ENCODE measurements at regions of chr17 and their contacts with region 1.

Region 1: DNA sequence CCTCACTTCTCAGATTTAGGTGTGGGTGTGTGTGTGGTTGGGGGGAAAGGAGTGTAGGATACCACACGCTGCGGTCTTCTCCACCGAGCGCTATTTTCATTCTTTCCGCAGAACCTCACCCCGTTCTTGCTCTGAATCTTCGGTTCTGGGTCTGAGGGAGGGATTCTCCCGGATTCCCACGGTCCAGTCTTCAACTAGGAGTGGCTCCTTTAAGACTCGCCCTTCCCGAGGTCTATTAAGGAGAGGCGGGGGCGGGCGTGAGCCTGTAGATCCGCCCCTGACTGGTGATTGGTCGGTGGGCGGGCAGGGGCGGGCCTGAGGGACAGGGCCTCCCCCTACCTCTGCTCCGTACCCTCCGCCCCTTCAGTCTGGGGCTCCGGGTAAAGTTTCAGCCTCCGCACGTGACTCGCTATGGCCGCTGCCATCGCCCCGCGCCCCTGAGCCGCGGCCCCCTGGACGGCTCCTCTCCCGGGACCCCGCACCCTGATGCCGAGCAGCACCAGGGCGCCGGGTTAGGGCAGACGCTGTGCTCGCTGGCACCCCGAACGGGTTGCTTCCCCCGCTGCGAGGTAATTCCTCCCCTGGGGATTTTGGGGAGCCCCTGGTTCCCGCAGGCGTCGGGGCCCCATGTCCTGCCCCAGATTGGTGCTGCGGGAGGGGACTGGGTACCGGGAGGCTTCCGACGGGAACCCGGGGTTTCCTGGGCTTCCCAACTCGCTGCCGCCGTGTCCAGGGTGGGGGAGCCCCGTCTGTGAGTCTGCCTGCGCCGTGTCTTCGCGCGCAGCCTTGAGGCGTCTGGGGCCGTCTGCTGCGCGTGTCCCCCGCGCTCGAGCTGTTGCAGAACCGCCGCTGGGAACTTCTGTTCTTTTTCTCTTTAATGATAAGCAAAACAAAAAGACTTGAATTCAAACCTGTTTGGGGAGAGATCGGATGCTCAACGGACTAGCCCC is 9.2 kb downstream of the RARA start:
- DNase-seq: peak; percentile 84
- H3K4me3 ChIP-seq: peak overlapping the region; percentile 92
- CTCF ChIP-seq: no peak

Region 2: DNA sequence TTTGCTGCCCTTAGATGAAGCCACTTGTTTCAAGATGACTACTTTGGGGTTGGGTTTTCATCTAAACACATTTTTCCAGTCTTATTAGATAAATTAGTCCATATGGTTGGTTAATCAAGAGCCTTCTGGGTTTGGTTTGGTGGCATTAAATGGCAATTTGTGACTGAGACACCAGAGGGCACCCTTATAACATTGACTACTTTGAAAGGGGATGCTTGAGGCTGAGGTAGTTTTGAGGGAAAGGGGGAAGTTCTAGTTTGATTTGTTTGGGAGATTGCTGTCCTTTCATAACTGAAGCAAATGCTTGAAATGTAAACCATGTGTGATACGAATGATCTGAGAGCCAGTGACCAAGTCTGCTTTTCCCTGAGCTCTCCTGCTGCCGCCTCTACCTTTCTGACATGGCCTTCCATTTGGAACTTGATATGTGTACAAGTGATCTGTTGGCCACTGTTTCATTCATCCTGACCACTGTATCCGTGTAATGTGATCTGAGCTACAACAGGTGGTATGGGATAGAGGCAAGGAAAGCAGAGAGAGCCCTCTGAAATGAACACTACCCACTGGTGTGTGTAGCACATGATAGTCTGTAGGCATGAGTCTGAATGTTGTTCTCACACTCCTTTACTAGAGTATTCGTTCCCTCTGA is 15.0 kb before region 1 on chr17:
- CTCF ChIA-PET with region 1: interaction called, 110 read pairs
- POLR2A ChIA-PET with region 1: interaction called, 35 read pairs
- DNase-seq: no peak
- H3K4me3 ChIP-seq: no peak overlapping the region
- CTCF ChIP-seq: peak; percentile 58

Region 3: DNA sequence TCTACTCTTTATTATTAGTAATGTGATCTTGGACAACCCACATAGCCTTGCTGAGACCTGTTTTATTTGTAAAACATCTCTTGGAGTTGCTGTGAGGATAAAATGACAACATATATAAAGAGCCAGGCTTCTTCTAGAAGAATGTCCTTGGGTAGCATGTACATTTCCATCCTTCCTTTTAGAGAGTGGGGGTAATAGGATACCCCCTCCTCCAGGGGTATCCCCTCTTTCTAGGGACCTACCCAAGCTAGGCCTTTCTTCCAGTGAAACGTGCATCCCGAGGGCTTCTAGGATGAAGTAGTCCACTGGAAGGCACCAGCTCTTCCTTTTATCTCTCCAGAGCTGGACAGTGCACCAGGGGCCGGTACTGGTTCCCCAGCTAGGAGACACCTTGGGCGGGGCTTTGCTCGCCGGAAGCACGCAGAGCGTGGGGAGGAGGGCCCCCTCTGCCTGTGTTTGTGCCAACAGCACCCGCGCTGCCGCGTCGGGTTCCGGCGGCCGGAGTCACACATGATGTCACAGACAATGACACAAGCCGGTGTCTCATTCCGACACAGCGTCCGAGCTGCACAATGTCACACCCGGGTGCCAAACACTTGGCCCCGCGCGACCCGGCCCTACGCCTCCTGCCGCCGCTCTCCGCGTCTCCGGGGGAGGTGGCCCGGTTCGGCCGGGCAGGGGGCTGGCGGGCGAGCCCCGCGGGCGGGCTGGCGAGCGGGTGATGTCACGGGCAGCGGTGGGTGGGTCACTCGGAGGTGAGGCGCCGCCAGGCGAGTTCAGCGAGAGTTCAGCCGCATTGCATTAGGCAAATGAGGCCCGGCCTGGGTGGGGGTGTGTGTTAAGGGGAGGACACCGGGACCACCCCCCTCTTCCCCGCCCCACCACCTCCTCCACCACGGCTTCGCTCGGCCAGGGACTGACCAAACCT is 23.0 kb after region 1 on chr17:
- CTCF ChIA-PET with region 1: interaction called, 649 read pairs
- POLR2A ChIA-PET with region 1: interaction called, 3 read pairs
- DNase-seq: no peak
- H3K4me3 ChIP-seq: peak overlapping the region; percentile 62
- CTCF ChIP-seq: no peak

Region 4: GRCh38 chr17:40355123-40355803 is 37.1 kb after region 1 on chr17:
- CTCF ChIA-PET with region 1: interaction called, 649 read pairs
- POLR2A ChIA-PET with region 1: no interaction called
- DNase-seq: no peak
- H3K4me3 ChIP-seq: no peak overlapping the region
- CTCF ChIP-seq: peak; percentile 98